Activated CD4-positive, alpha-beta memory T cell treated with anti-CD3 and anti-CD28 coated beads, Interleukin-2, amount 10 ng/mL, durations not matched to agents 7 days and 5 days (primary cell): ENCODE measurements at regions of chr1 and their contacts with region 1.

Region 1: DNA sequence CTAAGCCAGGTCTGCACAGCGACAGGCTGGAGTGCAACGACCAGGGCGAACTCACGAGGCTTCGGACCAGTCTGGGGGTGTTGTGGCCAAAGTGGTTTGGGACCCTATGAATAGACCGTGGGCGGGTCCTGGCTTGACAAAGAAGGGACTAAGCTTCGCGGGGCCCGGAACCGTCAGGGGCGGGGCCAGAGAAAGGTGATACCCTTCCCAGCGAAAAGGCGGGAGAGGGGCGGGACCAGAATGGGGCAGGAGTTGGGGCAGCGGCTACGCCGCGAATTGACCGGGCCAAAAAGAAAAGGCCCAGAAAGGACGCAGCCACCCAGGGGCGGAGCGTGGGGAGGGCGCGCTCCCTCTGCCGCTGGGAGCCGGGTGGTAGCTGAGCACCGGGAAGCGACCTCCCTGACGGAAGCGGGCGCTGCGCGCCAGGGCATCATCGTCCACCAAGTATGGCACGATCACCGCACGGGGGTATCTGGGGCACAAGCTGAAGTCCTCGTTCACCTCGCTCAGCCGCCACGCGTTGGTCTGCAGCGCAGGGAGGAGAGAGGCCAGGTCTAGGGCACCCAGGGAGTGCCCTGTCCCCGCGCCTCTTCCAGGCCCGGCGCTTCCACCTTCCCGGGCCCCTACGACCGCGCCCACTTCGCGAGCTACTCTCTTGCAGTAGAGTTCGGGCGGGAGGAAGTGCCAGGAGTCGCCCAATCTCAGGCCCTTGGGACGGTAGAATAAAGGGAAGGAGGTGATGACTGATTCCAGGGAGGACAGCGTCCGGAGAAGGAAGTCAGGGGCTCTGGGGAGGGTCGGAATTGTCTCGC is 6.7 kb upstream of the FAM167B start:
- DNase-seq: peak; percentile 54
- H3K4me3 Mint-ChIP-seq: peak overlapping the region; percentile 78
- H3K27ac Mint-ChIP-seq: no peak overlapping the region
- H3K4me1 Mint-ChIP-seq: peaks cover 19% of the 10 kb centered on the region
- H3K27me3 Mint-ChIP-seq: no peaks in the 10 kb centered on the region

Region 2: DNA sequence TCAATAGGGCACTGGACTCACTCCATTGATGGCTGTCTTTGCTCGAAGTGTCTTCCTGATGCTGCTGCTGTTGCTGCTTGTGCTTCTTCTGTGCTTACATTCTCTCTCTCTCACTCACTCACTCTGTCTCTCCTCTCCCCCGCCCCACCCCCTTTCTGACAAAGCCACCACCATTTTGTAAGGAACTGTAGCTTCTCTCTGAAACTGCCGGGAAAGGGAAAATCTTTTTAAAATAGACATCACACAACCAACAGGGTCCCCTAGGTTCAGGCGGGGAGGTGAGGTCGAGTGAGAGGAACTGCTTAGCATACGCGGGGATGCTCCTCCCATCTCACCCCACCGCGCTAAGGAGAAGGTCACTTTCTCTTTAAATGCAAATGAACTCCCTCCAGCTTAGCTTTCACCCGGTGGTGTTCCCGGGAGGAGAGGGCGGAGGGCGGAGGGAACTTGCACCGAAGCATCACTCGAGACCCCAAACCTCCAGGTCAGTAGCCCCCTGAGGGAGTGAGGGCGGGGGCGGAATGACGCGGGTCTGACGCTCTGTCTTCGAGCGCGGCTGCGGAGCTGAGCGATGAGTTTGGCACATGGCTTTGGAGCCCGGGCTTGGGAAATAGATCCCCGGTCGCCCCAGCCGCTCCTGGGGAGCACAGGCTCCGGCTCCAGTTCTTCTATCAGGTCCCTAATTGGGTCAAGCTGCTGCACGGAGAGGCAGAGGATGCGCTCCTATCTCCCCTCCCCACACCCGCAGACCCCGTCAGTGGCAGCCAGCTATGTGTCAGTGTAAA is 39.9 kb before region 1 on chr1 and contains the start of gene CCDC28B:
- CTCF ChIA-PET with region 1: interaction called, 6 read pairs
- POLR2A ChIA-PET with region 1: interaction called, 14 read pairs
- DNase-seq: peak; percentile 54
- H3K4me3 Mint-ChIP-seq: peak within 1 kb of the TSS; percentile 72
- H3K27ac Mint-ChIP-seq: peak within 1 kb of the TSS; percentile 79
- H3K4me1 Mint-ChIP-seq: peaks cover 72% of the 10 kb centered on the region
- H3K27me3 Mint-ChIP-seq: no peaks in the 10 kb centered on the region
- total RNA-seq, gene CCDC28B: 20.2 to 23.5 TPM

Region 3: DNA sequence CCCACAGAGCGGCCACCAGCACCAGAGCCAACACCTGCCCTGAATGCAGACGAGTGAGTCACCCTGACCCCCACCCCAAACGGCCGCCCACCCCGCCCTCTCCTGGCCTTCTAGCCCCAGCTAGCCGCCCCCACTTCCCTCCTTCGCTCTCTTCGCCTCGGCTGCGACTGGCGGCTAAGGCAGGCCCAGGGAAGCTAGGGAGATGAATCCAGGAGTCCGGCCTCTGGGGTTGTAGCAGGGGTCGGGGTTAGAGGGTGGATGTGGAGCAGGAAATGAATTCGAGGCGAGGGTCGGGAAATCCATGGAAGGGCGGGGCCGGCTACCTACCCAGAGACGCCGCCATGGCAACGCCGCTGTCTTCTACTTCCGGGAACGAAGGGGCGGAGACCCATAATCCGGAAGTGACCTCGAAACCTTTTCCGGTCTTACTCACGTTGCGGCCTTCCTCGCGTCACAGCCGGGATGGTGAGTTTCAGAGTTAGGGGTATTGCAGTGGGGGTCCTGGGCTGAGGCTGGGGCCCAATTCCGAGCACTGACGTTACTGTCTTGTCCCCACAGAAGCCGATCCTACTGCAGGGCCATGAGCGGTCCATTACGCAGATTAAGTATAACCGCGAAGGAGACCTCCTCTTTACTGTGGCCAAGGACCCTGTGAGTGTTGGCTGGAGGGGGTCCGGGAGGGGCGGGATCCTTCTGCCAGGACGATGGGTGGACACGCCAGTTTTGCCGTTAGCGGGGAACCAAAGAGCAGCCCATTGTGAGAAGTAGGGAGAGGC is 18.2 kb before region 1 on chr1 and contains the starts of genes EIF3I and TMEM234:
- CTCF ChIA-PET with region 1: interaction called, 7 read pairs
- POLR2A ChIA-PET with region 1: interaction called, 18 read pairs
- DNase-seq: peak; percentile 93
- H3K4me3 Mint-ChIP-seq: peak within 1 kb of the TSS; percentile 97
- H3K27ac Mint-ChIP-seq: peak within 1 kb of the TSS; percentile 94
- H3K4me1 Mint-ChIP-seq: peaks cover 46% of the 10 kb centered on the region
- H3K27me3 Mint-ChIP-seq: no peaks in the 10 kb centered on the region
- total RNA-seq, gene EIF3I: 161 to 172 TPM
- total RNA-seq, gene TMEM234: 15.3 to 16.4 TPM

Region 4: GRCh38 chr1:32228771-32229170 is 11.6 kb before region 1 on chr1:
- CTCF ChIA-PET with region 1: interaction called, 7 read pairs
- POLR2A ChIA-PET with region 1: interaction called, 18 read pairs
- DNase-seq: no peak
- H3K4me3 Mint-ChIP-seq: no peak overlapping the region
- H3K27ac Mint-ChIP-seq: no peak overlapping the region
- H3K4me1 Mint-ChIP-seq: peaks cover 21% of the 10 kb centered on the region
- H3K27me3 Mint-ChIP-seq: no peaks in the 10 kb centered on the region

Region 5: GRCh38 chr1:32291708-32292492 is 51.6 kb after region 1 on chr1 and contains the start of gene HDAC1:
- CTCF ChIA-PET with region 1: interaction called, 6 read pairs
- POLR2A ChIA-PET with region 1: interaction called, 12 read pairs
- DNase-seq: peak; percentile 98
- H3K4me3 Mint-ChIP-seq: peak within 1 kb of the TSS; percentile 91
- H3K27ac Mint-ChIP-seq: peak within 1 kb of the TSS; percentile 84
- H3K4me1 Mint-ChIP-seq: peaks cover 53% of the 10 kb centered on the region
- H3K27me3 Mint-ChIP-seq: no peaks in the 10 kb centered on the region
- total RNA-seq, gene HDAC1: 180 to 185 TPM